A549 (cell line): ENCODE measurements at regions of chr7 and their contacts with region 1.

Region 1: GRCh38 chr7:101410743-101411507 is 48.2 kb downstream of the COL26A1 start:
- DNase-seq: peak; percentile 51 to 61
- ATAC-seq: peak; percentile 40 to 85; a peak in 3 of 6 replicates
- H3K4me3 ChIP-seq: no peak overlapping the region
- H3K27ac ChIP-seq: no peak overlapping the region
- H3K4me1 ChIP-seq: no peaks in the 10 kb centered on the region
- CTCF ChIP-seq: peak; percentile 56
- EP300 ChIP-seq: no peak
- POLR2A ChIP-seq: no peak
- RAD21 ChIP-seq: peak; percentile 48 to 55

Region 2: DNA sequence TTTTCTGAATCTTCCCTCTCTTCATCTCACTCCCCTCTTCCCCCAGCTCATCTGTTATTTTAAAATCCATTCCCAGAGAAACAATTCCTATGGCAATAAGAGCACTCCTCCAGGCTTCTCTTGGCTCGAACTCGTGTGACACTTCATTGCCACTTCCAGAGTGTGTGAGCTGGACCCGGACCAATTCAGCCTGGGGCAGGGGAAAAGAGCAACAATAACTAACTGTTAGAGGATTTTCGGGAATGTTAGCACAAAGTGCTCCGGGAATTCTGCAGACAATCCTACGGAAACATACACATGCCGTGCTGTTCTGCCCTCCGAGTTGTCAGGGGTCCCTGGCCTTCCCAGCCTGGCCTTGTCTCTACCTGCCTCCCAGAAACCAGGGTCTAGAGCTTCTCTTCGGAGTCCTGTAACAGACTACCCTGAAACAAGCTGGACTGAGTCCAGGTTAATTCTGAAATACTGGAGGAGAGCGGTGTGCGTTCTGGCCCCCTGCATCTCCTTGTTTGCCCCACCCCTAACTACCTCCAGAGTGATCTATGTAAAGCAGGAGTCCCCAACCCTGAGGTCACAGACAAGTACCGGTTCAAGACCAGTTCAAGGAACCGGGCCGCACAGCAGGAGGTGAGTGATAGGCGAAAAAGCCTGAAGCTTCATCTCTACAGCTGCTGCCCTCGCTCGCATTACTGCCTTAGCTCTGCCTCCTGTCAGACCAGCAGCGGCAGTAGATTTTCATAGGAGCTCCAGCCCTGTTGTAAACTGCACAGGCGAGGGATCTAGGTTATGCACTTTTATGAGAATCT is 36.9 kb before region 1 on chr7:
- CTCF ChIA-PET with region 1: interaction called, 24 read pairs
- POLR2A ChIA-PET with region 1: no interaction called
- DNase-seq: no peak
- ATAC-seq: no peak
- H3K4me3 ChIP-seq: no peak overlapping the region
- H3K27ac ChIP-seq: no peak overlapping the region
- H3K4me1 ChIP-seq: peaks cover 11% of the 10 kb centered on the region; the same call in 1 of the 3 replicates
- CTCF ChIP-seq: no peak
- EP300 ChIP-seq: no peak
- POLR2A ChIP-seq: no peak
- RAD21 ChIP-seq: no peak

Region 3: DNA sequence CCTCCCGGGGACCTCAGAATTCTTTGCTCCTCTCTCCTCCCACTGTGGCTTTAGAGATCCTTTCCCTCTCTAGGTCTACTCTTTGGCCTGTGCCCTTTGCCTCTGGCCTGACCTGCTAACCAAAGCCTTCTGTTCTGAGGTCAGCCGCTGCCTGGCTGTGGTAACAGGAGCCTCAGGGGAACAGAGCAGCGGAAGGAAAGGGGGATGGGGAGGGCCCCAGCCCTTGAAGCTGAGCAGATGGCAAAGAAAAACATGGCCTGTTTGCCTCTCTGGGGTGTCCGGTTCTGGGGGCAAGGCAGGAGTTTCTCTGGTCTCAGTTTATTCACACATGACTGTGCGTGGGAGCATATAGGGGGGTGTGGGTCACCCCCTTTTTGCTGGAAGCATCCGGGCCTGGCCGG is 20.0 kb before region 1 on chr7:
- CTCF ChIA-PET with region 1: interaction called, 24 read pairs
- POLR2A ChIA-PET with region 1: no interaction called
- DNase-seq: no peak
- ATAC-seq: no peak
- H3K4me3 ChIP-seq: no peak overlapping the region
- H3K27ac ChIP-seq: no peak overlapping the region
- H3K4me1 ChIP-seq: no peaks in the 10 kb centered on the region
- CTCF ChIP-seq: no peak
- EP300 ChIP-seq: no peak
- POLR2A ChIP-seq: no peak
- RAD21 ChIP-seq: no peak

Region 4: GRCh38 chr7:101426303-101427011 is 15.5 kb after region 1 on chr7:
- CTCF ChIA-PET with region 1: interaction called, 19 read pairs
- POLR2A ChIA-PET with region 1: no interaction called
- DNase-seq: no peak
- ATAC-seq: no peak
- H3K4me3 ChIP-seq: no peak overlapping the region
- H3K27ac ChIP-seq: no peak overlapping the region
- H3K4me1 ChIP-seq: no peaks in the 10 kb centered on the region
- CTCF ChIP-seq: no peak
- EP300 ChIP-seq: no peak
- POLR2A ChIP-seq: no peak
- RAD21 ChIP-seq: no peak

Region 5: DNA sequence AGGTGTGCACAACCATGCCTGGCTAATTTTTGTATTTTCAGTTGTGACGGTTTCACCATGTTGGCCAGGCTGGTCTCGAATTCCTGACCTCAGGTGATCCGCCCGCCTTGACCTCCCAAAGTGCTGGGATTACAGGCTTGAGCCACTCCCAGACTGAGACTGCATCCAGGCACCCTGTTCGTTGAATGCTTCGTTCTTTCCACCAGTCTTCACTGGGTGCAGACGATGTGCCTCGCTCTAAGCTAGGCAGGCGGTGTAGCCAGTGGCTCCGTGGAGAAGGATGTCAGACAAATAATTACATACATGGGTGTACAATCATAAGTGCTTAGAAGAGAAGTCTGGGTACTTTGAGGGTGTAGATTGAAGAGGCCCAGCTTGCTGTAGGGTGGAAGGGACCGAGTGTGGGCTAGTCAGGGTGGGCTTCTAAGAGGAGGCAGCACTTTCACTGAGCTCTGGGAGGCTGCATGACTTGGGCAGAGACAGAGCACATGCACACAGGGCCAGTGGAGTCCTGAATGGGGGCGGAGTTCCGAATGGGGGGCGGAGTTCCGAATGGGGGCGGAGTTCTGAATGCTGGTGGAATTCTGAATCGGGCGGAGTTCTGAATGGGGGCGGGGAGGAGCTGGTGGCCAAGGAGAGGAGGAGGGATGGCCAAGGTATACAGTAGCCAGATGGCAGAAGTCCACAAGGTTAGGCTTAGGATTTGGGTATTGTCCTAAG is 26.1 kb after region 1 on chr7:
- CTCF ChIA-PET with region 1: interaction called, 10 read pairs
- POLR2A ChIA-PET with region 1: no interaction called
- DNase-seq: peak; percentile 34 to 41
- ATAC-seq: peak; percentile 36 to 63; a peak in 4 of 6 replicates
- H3K4me3 ChIP-seq: no peak overlapping the region
- H3K27ac ChIP-seq: no peak overlapping the region
- H3K4me1 ChIP-seq: no peaks in the 10 kb centered on the region
- CTCF ChIP-seq: no peak
- EP300 ChIP-seq: no peak
- POLR2A ChIP-seq: no peak
- RAD21 ChIP-seq: no peak

Region 6: DNA sequence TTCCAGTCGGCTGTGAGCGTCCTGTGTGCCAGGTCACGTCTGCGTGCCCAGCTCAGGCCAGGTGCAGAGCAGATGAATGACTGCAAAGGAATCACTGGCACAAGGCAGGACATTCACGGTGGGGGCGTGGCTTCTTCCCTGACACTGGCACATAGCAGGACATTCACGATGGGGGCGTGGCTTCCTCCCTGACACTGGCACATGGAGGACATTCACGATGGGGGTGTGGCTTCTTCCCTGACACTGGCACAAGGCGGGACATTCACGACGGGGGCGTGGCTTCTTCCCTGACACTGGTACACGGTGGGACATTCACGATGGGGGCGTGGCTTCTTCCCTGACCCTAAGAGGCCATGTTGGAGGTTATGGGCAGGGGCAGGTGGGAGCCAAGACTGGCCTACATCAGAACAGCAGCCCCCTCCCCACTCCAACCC is 153.9 kb after region 1 on chr7:
- CTCF ChIA-PET with region 1: no interaction called
- POLR2A ChIA-PET with region 1: no interaction called
- DNase-seq: peak; percentile 67 to 76
- ATAC-seq: peak; percentile 52 to 80
- H3K4me3 ChIP-seq: no peak overlapping the region
- H3K27ac ChIP-seq: no peak overlapping the region
- H3K4me1 ChIP-seq: no peaks in the 10 kb centered on the region
- CTCF ChIP-seq: no peak
- EP300 ChIP-seq: no peak
- POLR2A ChIP-seq: no peak
- RAD21 ChIP-seq: no peak